Cardiac septum (tissue), 1 donor: ENCODE measurements at regions of chr11 and their contacts with region 1.

Region 1: GRCh38 chr11:1469911-1470680 is 16.5 kb downstream of the MOB2 start:
- DNase-seq: no peak

Region 2: GRCh38 chr11:1505480-1505879 is 35.4 kb after region 1 on chr11:
- intact Hi-C with region 1: loop called (anchors 5 kb)
- DNase-seq: no peak